K562 (cell line): ENCODE measurements at regions of chr14 and their contacts with region 1.

Region 1: GRCh38 chr14:53152890-53153701 is at the start of gene DDHD1:
- DNase-seq: peak; percentile 85 to 90 (median 88)
- ATAC-seq: peak; percentile 88
- H3K4me3 ChIP-seq: peak within 1 kb of the TSS; percentile 68
- H3K27ac ChIP-seq: peak within 1 kb of the TSS; percentile 81
- H3K4me1 ChIP-seq: peaks cover 9 to 12% of the 10 kb centered on the region in 2 experiments; a peak in 4 of 5 replicates
- H3K27me3 ChIP-seq: no peaks in the 10 kb centered on the region
- CTCF ChIP-seq: no peak
- EP300 ChIP-seq: no peak
- POLR2A ChIP-seq: peak; percentile 75
- RAD21 ChIP-seq: no peak
- polyA plus RNA-seq, gene DDHD1: 1.2 to 2.0 TPM

Region 2: DNA sequence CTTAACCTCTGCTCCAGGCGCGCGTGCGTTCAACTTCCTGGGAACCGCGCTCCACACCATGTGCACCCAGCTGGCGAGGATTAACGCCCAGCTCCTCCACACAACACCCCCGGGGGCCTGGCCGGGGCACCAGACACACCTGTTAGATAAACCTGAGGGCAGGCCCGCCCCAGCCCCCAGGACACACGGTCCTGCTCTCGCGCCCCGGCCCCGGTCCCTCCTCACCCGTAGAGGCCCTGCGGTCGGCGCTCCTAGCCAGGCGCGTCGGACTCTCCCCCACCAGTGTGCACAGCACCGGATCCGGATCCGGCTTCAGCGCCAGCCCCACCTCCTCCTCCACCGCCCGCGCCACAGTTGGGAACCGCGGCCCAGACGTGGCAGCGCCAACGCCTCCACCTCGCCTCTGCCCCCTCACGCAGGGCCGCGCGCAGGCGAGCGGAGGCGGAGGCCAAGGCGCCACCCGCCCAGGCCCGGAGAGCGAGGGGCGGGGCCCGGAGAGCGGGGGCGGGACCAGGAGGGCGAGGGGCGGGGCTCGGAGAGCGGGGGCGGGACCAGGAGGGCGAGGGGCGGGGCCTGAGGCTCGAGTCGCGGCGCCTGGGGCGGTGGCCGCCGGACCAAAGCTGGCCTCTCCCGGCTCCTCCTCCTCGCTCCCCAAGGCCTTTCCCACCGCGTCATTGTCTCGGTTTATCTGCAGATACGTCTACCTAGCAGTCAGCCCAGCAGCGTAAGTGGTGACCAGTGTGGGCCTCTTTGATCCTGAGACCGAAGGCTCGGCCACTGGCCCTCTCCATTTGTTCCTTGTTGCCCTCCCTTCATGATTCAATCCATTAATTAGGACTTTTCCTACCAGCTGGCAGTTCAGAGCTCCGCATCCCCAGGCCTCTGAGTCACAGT is 361.6 kb before region 1 on chr14 and contains the start of gene GNPNAT1:
- CTCF ChIA-PET with region 1: no interaction called
- POLR2A ChIA-PET with region 1: no interaction called
- in situ Hi-C with region 1: no loop called
- intact Hi-C with region 1: loop called (anchors 10 kb)
- DNase-seq: peak; percentile 87 to 90 (median 88)
- ATAC-seq: peak; percentile 90
- H3K4me3 ChIP-seq: peak within 1 kb of the TSS; percentile 66
- H3K27ac ChIP-seq: peak within 1 kb of the TSS; percentile 82
- H3K4me1 ChIP-seq: peaks cover 10 to 16% of the 10 kb centered on the region in 2 experiments; a peak in 4 of 5 replicates
- H3K27me3 ChIP-seq: no peaks in the 10 kb centered on the region
- CTCF ChIP-seq: no peak
- EP300 ChIP-seq: no peak
- POLR2A ChIP-seq: peak; percentile 82
- RAD21 ChIP-seq: no peak
- polyA plus RNA-seq, gene GNPNAT1: 15.8 to 26.0 TPM

Region 3: DNA sequence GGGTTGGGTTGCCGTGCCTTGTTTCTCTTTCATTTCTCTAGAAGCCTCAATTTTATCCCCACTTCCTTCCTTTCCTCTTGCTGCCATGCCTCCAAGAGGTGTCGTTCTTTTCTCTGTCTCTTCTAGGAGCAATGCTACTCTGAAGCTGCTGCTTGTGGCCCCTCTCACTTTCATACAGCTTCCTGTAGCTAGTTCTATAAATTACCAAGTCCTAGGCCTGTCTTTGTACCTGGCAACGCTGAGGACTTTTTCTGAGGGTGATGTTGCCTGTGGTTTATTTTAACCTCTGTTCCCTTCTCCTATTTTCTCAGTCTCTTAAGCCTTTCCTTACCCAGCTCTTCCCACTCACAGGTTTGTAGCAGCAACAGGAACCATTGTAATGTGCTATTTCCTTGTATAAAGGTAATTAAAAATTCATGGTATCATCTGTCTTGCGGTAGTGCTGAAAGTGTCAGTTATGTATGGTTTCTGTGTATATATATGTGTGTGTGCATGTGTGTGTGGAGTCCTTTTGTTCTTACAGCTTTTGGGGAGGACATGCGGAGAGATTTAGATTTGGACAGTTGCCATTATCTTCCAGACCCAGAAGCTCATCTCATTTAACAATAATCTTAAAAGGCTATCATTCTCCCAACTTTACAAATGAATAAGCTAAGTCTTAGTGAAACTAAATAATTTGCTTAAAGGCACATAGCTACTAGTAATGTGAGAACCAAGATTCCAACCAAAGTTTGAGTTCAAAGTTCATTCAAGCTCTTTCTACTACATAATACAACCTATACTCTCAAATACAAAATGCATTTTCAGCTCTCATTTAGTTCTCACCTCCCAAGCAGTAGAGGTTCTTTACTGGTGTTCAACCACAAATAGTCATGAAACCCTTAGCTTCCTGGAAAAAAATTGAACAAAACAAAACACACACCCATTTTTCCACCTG is 43.7 kb before region 1 on chr14:
- CTCF ChIA-PET with region 1: no interaction called
- POLR2A ChIA-PET with region 1: no interaction called
- in situ Hi-C with region 1: no loop called
- intact Hi-C with region 1: loop called (anchors 5 kb)
- DNase-seq: peak in 2 of 4 experiments; percentile 8 to 14
- ATAC-seq: peak; percentile 59
- H3K4me3 ChIP-seq: no peak overlapping the region
- H3K27ac ChIP-seq: peak overlapping the region; percentile 43
- H3K4me1 ChIP-seq: peaks cover 0 to 7% of the 10 kb centered on the region in 2 experiments; a peak in 3 of 5 replicates
- H3K27me3 ChIP-seq: no peaks in the 10 kb centered on the region
- CTCF ChIP-seq: no peak
- EP300 ChIP-seq: no peak
- POLR2A ChIP-seq: no peak
- RAD21 ChIP-seq: no peak

Region 4: GRCh38 chr14:53278930-53279506 is 125.9 kb after region 1 on chr14:
- CTCF ChIA-PET with region 1: no interaction called
- POLR2A ChIA-PET with region 1: no interaction called
- in situ Hi-C with region 1: no loop called
- intact Hi-C with region 1: no loop called
- DNase-seq: peak in 1 of 4 experiments; percentile 45
- ATAC-seq: peak; percentile 84
- H3K4me3 ChIP-seq: no peak overlapping the region
- H3K27ac ChIP-seq: no peak overlapping the region
- H3K4me1 ChIP-seq: peaks cover 0 to 6% of the 10 kb centered on the region in 2 experiments; a peak in 3 of 5 replicates
- H3K27me3 ChIP-seq: no peaks in the 10 kb centered on the region
- CTCF ChIP-seq: no peak
- EP300 ChIP-seq: no peak
- POLR2A ChIP-seq: no peak
- RAD21 ChIP-seq: no peak

Region 5: GRCh38 chr14:53380052-53380866 is 227.2 kb after region 1 on chr14:
- CTCF ChIA-PET with region 1: no interaction called
- POLR2A ChIA-PET with region 1: no interaction called
- in situ Hi-C with region 1: no loop called
- intact Hi-C with region 1: no loop called
- DNase-seq: no peak
- ATAC-seq: no peak
- H3K4me3 ChIP-seq: no peak overlapping the region
- H3K27ac ChIP-seq: no peak overlapping the region
- H3K4me1 ChIP-seq: no peaks in the 10 kb centered on the region
- H3K27me3 ChIP-seq: no peaks in the 10 kb centered on the region
- CTCF ChIP-seq: no peak
- EP300 ChIP-seq: no peak
- POLR2A ChIP-seq: no peak
- RAD21 ChIP-seq: no peak